ENCODE measurements at regions of chr6 and their contacts with region 1.

Region 1: DNA sequence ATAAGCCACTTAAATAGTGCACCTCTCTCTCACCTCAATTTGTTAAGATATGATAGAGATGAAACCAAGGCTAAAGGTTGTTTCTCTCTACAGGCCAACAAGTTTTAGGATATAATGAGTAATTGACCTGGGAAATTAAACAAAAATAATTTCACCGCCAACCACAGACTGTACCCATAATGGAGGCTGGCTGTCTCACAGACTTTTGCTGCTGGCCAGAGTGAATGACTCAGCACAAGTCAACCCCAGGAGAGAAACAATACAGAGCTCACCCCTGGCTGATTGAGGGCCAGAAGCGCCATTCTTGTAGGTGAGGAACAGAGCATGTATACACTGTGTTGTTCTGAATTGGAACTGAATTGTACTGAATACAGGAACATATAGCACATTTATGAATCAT is 99.9 kb downstream of the CAP2 start:
- DNase-seq: no peak
- H3K4me3 ChIP-seq: no peak overlapping the region
- H3K27me3 ChIP-seq: no peaks in the 10 kb centered on the region
- CTCF ChIP-seq: no peak

Region 2: GRCh38 chr6:17226786-17227233 is 266.5 kb before region 1 on chr6:
- CTCF ChIA-PET with region 1: no interaction called
- POLR2A ChIA-PET with region 1: no interaction called
- DNase-seq: no peak
- H3K4me3 ChIP-seq: no peak overlapping the region
- H3K27me3 ChIP-seq: no peaks in the 10 kb centered on the region
- CTCF ChIP-seq: no peak

Region 3: DNA sequence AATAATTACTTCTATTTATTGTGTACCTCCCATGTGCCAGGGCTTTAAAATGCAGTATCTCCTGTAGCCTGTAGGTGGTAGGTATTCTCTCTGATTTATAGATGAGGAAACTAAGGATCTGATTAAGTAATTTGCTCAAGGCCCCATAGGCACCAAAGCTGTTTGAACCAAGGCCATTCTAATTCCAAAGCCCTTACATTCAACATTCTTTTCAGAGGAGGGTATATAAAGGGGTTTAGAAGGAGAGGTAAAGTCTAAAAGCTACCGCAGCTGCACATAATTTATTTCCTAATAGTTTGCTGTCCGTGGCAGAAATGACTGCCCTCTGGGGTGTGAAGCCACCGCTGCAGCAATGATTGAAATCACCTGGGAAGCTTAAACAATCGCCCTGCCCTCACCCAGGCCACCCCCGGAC is 11.8 kb after region 1 on chr6:
- CTCF ChIA-PET with region 1: interaction called, 31 read pairs
- POLR2A ChIA-PET with region 1: interaction called, 6 read pairs
- DNase-seq: no peak
- H3K4me3 ChIP-seq: no peak overlapping the region
- H3K27me3 ChIP-seq: no peaks in the 10 kb centered on the region
- CTCF ChIP-seq: peak; percentile 38

Measured in BJ (cell line).